SK-N-SH (cell line): ENCODE measurements at regions of chr12 and their contacts with region 1.

Region 1: DNA sequence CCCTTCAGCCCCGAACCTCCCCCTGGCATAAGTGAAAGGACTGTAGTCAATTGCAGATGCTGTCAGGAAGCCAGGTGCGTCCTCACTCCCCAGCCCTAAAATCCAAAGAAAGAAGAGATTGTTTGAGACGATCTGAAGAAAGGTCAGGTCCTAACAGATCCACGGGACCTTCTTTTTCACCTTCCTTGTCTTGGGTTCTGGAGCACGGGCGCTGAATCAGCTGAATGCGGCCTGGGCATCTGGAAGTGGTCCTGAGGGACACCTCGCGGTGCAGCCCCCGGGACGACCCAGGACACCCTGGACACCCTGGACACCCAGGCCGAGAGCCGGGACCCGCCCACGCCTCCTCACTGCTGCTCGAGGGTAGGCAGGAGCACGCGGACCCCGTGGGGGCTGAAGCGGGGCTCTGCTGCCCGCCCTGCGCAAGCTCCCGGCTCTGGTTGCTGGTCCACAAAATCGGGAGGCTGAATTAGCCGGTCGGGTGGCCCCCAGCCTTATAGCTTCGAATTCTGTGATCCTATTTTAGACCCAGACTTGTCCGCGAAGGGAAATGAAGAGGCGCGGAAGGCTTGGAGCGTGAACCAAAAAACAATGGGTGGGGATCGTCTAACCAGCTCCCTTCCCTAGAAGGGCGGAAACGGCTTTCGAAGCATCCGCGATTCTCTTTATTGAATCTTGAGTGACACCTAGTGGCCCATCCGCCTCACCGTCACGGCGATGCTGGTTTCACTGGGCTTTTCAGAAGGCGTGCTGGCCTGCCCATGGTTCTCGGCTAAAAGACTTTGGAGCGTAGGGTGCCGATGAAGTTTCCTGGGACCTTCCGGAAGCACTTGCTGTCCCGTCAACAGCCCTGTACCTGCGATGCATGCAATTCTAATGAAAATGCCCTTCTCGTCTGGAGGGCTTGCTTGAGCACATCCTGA is 46.4 kb upstream of the PLXNC1 start:
- DNase-seq: peak; percentile 80
- H3K4me3 ChIP-seq: peak overlapping the region; percentile 63
- H3K27ac ChIP-seq: peak overlapping the region in 1 of 2 experiments; percentile 35; a peak in 1 of 4 replicates
- H3K4me1 ChIP-seq: peaks cover 8 to 14% of the 10 kb centered on the region in 2 experiments; a peak in 2 of 4 replicates
- H3K27me3 ChIP-seq: no peaks in the 10 kb centered on the region
- CTCF ChIP-seq: peak; percentile 87
- EP300 ChIP-seq: no peak
- RAD21 ChIP-seq: peak; percentile 88

Region 2: GRCh38 chr12:93397412-93397811 is 704.6 kb before region 1 on chr12:
- CTCF ChIA-PET with region 1: interaction called, 16 read pairs
- POLR2A ChIA-PET with region 1: no interaction called
- DNase-seq: no peak
- H3K4me3 ChIP-seq: no peak overlapping the region
- H3K27ac ChIP-seq: peak overlapping the region in 1 of 2 experiments; percentile 16; a peak in 1 of 4 replicates
- H3K4me1 ChIP-seq: no peaks in the 10 kb centered on the region
- H3K27me3 ChIP-seq: no peaks in the 10 kb centered on the region
- CTCF ChIP-seq: no peak
- EP300 ChIP-seq: no peak
- RAD21 ChIP-seq: no peak

Region 3: DNA sequence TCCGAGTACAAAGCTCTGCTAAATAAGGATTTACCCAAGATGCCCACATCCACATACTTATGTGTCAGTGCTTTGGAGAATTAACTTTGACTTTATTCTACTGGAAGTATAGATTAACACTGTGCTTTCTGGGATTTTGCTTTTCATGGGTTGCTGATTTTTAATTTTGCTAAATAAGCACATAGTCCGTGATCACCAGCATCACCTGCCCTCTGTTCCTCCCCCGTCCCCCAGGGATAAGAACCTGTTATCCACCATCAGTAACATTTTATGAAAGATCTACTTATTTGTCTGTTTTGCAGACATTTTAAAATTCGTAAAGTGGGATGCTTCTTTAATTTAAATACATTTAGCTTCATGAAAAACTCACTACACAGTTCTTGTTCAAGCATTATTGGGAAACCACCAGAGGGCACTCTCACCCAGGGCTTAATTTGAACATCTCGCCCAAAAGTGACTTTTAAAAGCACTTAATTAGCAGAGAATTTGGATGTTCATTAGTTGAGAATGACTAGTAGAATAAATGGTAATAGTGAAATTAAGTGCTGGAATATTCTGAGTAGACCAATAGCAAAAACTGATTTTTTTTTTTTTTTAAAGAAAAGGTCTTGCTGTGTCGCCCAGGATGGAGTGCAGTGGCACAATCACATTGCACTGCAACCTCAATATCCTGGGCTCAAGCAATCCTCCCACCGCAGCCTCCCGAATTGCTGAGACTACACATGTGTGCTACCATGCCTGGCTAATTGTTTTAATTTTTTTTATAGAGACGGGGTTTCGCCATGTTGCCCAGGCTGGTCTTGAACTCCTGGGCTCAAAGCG is 599.0 kb before region 1 on chr12:
- CTCF ChIA-PET with region 1: interaction called, 182 read pairs
- POLR2A ChIA-PET with region 1: interaction called, 3 read pairs
- DNase-seq: peak; percentile 26
- H3K4me3 ChIP-seq: no peak overlapping the region
- H3K27ac ChIP-seq: no peak overlapping the region
- H3K4me1 ChIP-seq: peaks cover 0 to 2% of the 10 kb centered on the region in 2 experiments; a peak in 1 of 4 replicates
- H3K27me3 ChIP-seq: no peaks in the 10 kb centered on the region
- CTCF ChIP-seq: peak; percentile 96
- EP300 ChIP-seq: no peak
- RAD21 ChIP-seq: peak; percentile 82

Region 4: DNA sequence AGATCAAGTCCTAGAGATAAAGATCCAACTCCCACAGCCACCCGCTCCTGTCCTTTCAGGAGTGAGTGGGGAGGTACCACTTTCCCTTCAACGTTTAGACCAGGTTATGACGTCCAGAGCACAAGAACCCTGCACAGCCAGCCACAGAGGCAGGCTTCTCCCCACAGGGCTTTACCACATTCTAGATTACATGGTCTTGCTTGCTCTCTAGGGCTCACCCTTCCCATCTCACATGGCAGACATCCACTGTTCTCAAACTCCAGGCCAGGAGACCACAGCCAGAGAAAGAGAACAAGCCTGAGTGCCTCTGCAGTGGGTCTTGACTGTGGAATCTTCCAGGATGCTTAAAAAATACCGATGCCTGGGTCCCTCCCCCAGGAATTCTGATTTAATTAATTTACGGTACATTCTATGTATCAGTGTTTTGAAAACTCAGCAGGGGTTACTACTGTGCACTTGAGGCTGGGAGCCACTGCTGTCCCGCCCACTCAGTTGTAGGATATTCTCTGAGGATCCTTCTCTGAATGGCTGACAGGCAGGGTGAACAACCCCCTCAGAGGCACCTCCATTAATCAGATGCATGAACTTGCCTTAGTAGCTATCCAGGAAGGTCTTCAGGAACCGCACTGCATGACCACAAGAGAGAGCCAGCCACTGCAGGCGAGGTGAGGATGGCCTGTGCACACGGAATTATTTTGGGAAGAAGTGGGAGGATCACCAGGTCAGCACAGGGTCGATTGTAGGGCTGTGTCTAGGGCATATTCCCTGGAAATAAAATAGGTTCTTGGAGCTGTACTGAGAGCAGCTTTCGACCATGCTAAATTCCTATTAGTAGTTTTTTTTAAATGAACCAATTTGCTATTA is 551.0 kb before region 1 on chr12:
- CTCF ChIA-PET with region 1: interaction called, 20 read pairs
- POLR2A ChIA-PET with region 1: no interaction called
- DNase-seq: no peak
- H3K4me3 ChIP-seq: no peak overlapping the region
- H3K27ac ChIP-seq: no peak overlapping the region
- H3K4me1 ChIP-seq: no peaks in the 10 kb centered on the region
- H3K27me3 ChIP-seq: no peaks in the 10 kb centered on the region
- CTCF ChIP-seq: no peak
- EP300 ChIP-seq: no peak
- RAD21 ChIP-seq: no peak

Region 5: GRCh38 chr12:93748672-93749383 is 353.2 kb before region 1 on chr12:
- CTCF ChIA-PET with region 1: interaction called, 18 read pairs
- POLR2A ChIA-PET with region 1: no interaction called
- DNase-seq: no peak
- H3K4me3 ChIP-seq: no peak overlapping the region
- H3K27ac ChIP-seq: peak overlapping the region in 1 of 2 experiments; percentile 40; a peak in 2 of 4 replicates
- H3K4me1 ChIP-seq: peaks cover 0 to 11% of the 10 kb centered on the region in 2 experiments; a peak in 2 of 4 replicates
- H3K27me3 ChIP-seq: no peaks in the 10 kb centered on the region
- CTCF ChIP-seq: no peak
- EP300 ChIP-seq: no peak
- RAD21 ChIP-seq: no peak

Region 6: GRCh38 chr12:93785262-93786010 is 316.6 kb before region 1 on chr12:
- CTCF ChIA-PET with region 1: interaction called, 18 read pairs
- POLR2A ChIA-PET with region 1: no interaction called
- DNase-seq: no peak
- H3K4me3 ChIP-seq: peak overlapping the region in 1 of 2 experiments; percentile 24; a peak in 1 of 4 replicates
- H3K27ac ChIP-seq: peak overlapping the region; percentile 94 to 99
- H3K4me1 ChIP-seq: peaks cover 32 to 46% of the 10 kb centered on the region in 2 experiments
- H3K27me3 ChIP-seq: no peaks in the 10 kb centered on the region
- CTCF ChIP-seq: no peak
- EP300 ChIP-seq: peak in 1 of 2 experiments; percentile 96; a peak in 2 of 4 replicates
- RAD21 ChIP-seq: no peak

Region 7: GRCh38 chr12:94080348-94081009 is 21.5 kb before region 1 on chr12:
- CTCF ChIA-PET with region 1: interaction called, 86 read pairs
- POLR2A ChIA-PET with region 1: no interaction called
- DNase-seq: no peak
- H3K4me3 ChIP-seq: no peak overlapping the region
- H3K27ac ChIP-seq: no peak overlapping the region
- H3K4me1 ChIP-seq: no peaks in the 10 kb centered on the region
- H3K27me3 ChIP-seq: no peaks in the 10 kb centered on the region
- CTCF ChIP-seq: no peak
- EP300 ChIP-seq: no peak
- RAD21 ChIP-seq: no peak